Ovary (tissue), 10 donors: ENCODE measurements at regions of chr14 and their contacts with region 1.

Region 1: GRCh38 chr14:105682940-105683570 is 156.7 kb downstream of the TMEM121 start:
- DNase-seq: no peak
- H3K4me3 ChIP-seq: no peak overlapping the region
- H3K27ac ChIP-seq: no peak overlapping the region
- H3K4me1 ChIP-seq: no peaks in the 10 kb centered on the region
- H3K27me3 ChIP-seq: no peaks in the 10 kb centered on the region
- CTCF ChIP-seq: no peak
- EP300 ChIP-seq: no peak
- POLR2A ChIP-seq: no peak

Region 2: GRCh38 chr14:105562713-105563346 is 120.2 kb before region 1 on chr14:
- intact Hi-C with region 1: loop called in 1 of 4 experiments (anchors 10 kb)
- DNase-seq: no peak
- H3K4me3 ChIP-seq: no peak overlapping the region
- H3K27ac ChIP-seq: no peak overlapping the region
- H3K4me1 ChIP-seq: no peaks in the 10 kb centered on the region
- H3K27me3 ChIP-seq: no peaks in the 10 kb centered on the region
- CTCF ChIP-seq: no peak
- EP300 ChIP-seq: no peak
- POLR2A ChIP-seq: no peak